ENCODE measurements at regions of chr15 and their contacts with region 1.

Region 1: GRCh38 chr15:28890711-28891495 is 5.1 kb downstream of the APBA2 start:
- DNase-seq: peak in 7 of 9 donors; percentile 47 to 83 (median 81)
- ATAC-seq: peak; percentile 78
- H3K4me3 ChIP-seq: peak overlapping the region; percentile 33
- H3K4me3 Mint-ChIP-seq: peak overlapping the region; percentile 62 to 92 (median 84)
- H3K27ac ChIP-seq: peak overlapping the region; percentile 79
- H3K27ac Mint-ChIP-seq: peak overlapping the region; percentile 89 to 100 (median 98)
- H3K4me1 ChIP-seq: peaks cover 12 to 54% of the 10 kb centered on the region in 2 donors
- H3K4me1 Mint-ChIP-seq: peaks cover 46 to 84% (median 76%) of the 10 kb centered on the region in 7 donors
- H3K27me3 ChIP-seq: no peaks in the 10 kb centered on the region
- H3K27me3 Mint-ChIP-seq: peaks cover 0 to 25% (median 0%) of the 10 kb centered on the region in 5 donors

Region 2: DNA sequence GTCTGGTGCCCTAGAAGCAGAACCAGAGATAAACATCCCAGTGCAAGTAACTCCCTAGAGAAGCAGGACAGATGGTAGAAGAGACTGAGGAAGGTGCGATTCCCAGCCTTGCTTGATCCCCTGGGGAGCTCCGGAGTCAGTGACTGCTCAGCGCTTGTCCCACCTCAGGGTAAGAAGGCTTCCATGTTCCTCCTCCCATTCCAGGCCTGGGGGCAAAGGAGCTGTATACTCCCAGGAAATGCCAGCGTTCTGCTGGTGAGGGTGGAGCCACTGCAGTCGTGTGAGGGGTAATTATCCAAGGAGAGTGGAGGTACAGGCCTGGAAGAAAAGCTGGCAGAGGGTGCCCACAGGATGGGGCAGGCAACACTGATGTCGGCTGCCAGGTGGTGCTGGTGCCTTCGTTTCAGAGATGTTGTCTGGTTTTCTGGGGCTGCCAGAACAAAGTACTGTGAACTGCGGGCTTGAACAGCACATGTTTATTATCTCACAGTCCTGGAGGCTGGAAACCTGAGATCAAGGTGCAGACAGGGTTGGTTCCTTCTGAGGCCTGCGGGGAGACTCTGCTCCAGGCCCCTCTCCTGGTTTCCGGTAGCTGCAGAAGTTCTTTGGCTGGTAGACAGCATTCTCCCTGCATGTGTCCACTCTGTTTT is 17.2 kb before region 1 on chr15:
- CTCF ChIA-PET with region 1: no interaction called
- POLR2A ChIA-PET with region 1: interaction called, 7 read pairs
- intact Hi-C with region 1: loop called in 1 of 2 experiments (anchors 2 kb)
- DNase-seq: peak in 7 of 9 donors; percentile 53 to 71 (median 58)
- ATAC-seq: peak; percentile 79
- H3K4me3 ChIP-seq: no peak overlapping the region
- H3K4me3 Mint-ChIP-seq: no peak overlapping the region
- H3K27ac ChIP-seq: no peak overlapping the region
- H3K27ac Mint-ChIP-seq: peak overlapping the region in 3 of 9 donors; percentile 28 to 70 (median 36)
- H3K4me1 ChIP-seq: peaks cover 0 to 9% of the 10 kb centered on the region in 2 donors
- H3K4me1 Mint-ChIP-seq: peaks cover 0 to 32% (median 22%) of the 10 kb centered on the region in 7 donors
- H3K27me3 ChIP-seq: no peaks in the 10 kb centered on the region
- H3K27me3 Mint-ChIP-seq: no peaks in the 10 kb centered on the region

Region 3: DNA sequence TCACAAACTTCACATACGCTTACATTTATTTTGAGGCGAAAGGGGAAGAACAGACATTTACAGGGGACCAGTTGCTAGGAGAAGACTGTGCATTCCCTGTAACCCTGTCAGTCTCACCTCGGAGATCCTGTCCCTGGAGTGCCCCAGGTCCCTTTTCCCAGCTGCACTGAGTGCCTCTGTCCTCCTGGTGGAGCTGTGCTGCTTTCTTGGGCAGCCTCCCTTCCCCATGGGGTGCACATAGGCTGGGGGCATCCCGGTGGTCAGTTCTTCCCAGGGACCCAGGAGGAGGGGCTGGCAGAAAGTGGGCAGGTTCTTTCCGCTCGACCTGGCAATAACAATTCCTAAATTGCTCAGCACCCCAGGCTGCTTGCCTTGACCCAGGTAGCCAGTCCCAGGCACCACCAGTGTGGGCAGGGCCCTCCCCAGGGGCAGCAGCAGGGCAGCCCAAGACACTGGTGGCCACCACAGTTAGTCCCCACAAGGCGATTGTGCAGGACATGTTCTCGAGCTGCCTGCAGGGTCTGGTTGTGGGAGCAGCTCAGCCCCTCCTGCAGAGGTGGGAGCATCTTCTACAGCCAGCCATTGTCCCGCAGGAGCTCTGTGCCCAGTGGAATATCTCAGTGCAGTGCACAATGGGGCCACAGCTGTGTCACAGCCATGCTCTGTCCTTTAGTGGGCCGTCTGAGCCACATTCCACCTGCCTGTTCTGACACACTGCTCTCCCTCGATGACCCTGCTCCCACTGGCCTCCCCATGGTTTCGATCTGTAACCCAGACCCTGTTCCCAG is 31.2 kb after region 1 on chr15:
- CTCF ChIA-PET with region 1: interaction called, 4 read pairs
- POLR2A ChIA-PET with region 1: interaction called, 7 read pairs
- intact Hi-C with region 1: loop called in 1 of 2 experiments (anchors 1 kb)
- DNase-seq: no peak
- ATAC-seq: no peak
- H3K4me3 ChIP-seq: no peak overlapping the region
- H3K4me3 Mint-ChIP-seq: peak overlapping the region in 8 of 10 donors; percentile 37 to 94 (median 74)
- H3K27ac ChIP-seq: no peak overlapping the region
- H3K27ac Mint-ChIP-seq: peak overlapping the region in 8 of 9 donors; percentile 54 to 93 (median 79)
- H3K4me1 ChIP-seq: peaks cover 0 to 51% of the 10 kb centered on the region in 2 donors
- H3K4me1 Mint-ChIP-seq: peaks cover 27 to 91% (median 75%) of the 10 kb centered on the region in 7 donors
- H3K27me3 ChIP-seq: no peaks in the 10 kb centered on the region
- H3K27me3 Mint-ChIP-seq: peaks cover 0 to 7% (median 0%) of the 10 kb centered on the region in 5 donors

Region 4: GRCh38 chr15:28947221-28947674 is 56.3 kb after region 1 on chr15:
- CTCF ChIA-PET with region 1: no interaction called
- POLR2A ChIA-PET with region 1: interaction called, 12 read pairs
- intact Hi-C with region 1: loop called in 1 of 2 experiments (anchors 2 kb)
- DNase-seq: no peak
- ATAC-seq: no peak
- H3K4me3 ChIP-seq: peak overlapping the region; percentile 50
- H3K4me3 Mint-ChIP-seq: peak overlapping the region in 9 of 10 donors; percentile 47 to 89 (median 81)
- H3K27ac ChIP-seq: peak overlapping the region; percentile 62
- H3K27ac Mint-ChIP-seq: peak overlapping the region in 8 of 9 donors; percentile 87 to 99 (median 95)
- H3K4me1 ChIP-seq: peaks cover 25 to 65% of the 10 kb centered on the region in 2 donors
- H3K4me1 Mint-ChIP-seq: peaks cover 18 to 93% (median 85%) of the 10 kb centered on the region in 7 donors
- H3K27me3 ChIP-seq: no peaks in the 10 kb centered on the region
- H3K27me3 Mint-ChIP-seq: peaks cover 0 to 6% (median 0%) of the 10 kb centered on the region in 5 donors

Measured in naive thymus-derived CD4-positive, alpha-beta T cell (primary cell).